ENCODE measurements at regions of chr1 and their contacts with region 1.

Region 1: DNA sequence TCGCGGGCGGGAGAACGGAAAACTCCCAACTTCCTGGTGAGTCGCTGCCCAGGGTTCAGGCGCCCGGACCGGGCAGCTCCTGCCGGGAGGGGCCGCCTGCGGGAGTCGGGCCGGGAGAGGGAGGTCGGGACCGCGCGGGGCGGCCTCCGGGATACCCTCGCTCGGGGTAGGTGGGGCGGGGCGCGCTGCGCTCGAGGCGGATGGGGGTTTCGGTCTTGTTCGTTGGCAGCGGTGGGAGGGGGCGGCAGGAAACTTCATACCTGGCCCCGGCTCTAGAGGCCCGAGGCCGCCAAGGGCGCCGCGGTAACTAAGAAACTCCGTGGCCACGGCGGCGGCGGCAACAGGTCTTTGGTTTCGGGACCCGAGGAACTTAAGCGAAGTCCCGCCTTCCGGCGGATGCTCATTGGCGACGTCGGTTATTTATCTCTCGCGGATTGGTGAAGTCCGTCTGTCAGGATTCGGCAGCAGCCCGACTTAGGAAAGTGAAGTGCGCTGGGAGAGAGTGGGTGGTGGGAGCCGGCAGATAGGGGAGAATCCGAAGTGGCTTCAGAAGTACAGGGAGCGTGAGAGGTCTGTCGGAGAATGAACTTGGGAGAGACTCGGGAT is 546 bp downstream of the NEK7 start:
- DNase-seq: peak; percentile 73
- ATAC-seq: peak; percentile 50
- H3K4me3 Mint-ChIP-seq: peak overlapping the region; percentile 98
- H3K27ac Mint-ChIP-seq: peak overlapping the region; percentile 98
- H3K4me1 Mint-ChIP-seq: peaks cover 49% of the 10 kb centered on the region
- H3K27me3 Mint-ChIP-seq: no peaks in the 10 kb centered on the region
- CTCF ChIP-seq: no peak

Region 2: DNA sequence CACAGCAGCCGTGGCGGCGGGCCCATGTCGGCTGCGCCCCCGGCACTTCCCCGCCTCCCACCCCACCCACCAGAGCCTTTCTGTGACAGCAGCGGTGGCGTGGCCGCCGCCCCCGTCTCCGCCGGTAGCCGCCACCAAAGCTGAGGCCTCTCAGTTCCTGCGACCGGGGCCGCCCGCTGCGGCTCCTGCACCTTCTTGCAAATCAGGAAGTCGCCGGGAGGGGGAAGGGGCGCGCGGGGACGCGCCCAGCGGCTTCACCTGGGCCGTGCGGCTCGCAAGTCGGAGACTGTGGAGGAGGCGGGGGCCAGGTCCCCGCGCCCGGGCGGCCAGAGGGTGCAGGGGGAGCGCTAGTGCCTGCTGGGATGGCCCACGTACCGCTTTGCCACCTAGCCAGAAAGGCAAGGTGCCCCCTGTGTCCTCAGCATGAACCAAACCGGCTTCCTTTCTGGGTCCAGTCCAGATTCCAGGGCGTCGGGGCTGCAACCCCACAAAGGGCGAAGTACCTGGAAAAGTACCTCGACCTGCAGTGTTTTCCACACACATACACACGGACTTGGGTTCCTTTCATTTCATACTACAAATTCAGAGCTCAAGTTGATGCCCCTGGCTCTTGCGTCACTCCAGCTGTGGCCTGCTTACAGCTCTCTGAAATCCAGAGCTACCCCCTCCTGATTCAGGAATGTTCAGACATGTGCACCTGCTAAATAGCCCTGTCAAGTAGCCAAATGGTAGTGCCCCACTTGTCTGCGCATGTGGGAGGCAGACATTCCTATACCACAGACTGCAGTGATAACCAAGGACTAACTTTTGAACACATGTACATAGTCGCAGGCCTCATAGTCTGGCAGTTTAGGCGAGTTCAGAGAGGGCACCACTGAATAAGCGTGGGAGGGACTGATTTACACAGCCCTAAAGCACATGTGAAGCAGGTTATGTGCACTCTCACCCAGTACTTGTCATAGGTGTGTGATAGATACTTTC is 381.8 kb before region 1 on chr1 and contains the start of gene DENND1B:
- CTCF ChIA-PET with region 1: no interaction called
- POLR2A ChIA-PET with region 1: no interaction called
- intact Hi-C with region 1: loop called (anchors 2 kb)
- DNase-seq: peak; percentile 81
- ATAC-seq: peak; percentile 72
- H3K4me3 Mint-ChIP-seq: peak within 1 kb of the TSS; percentile 87
- H3K27ac Mint-ChIP-seq: peak within 1 kb of the TSS; percentile 96
- H3K4me1 Mint-ChIP-seq: peaks cover 69% of the 10 kb centered on the region
- H3K27me3 Mint-ChIP-seq: no peaks in the 10 kb centered on the region
- CTCF ChIP-seq: no peak
- total RNA-seq, gene DENND1B: 15.5 and 19.2 TPM in 2 replicates

Region 3: DNA sequence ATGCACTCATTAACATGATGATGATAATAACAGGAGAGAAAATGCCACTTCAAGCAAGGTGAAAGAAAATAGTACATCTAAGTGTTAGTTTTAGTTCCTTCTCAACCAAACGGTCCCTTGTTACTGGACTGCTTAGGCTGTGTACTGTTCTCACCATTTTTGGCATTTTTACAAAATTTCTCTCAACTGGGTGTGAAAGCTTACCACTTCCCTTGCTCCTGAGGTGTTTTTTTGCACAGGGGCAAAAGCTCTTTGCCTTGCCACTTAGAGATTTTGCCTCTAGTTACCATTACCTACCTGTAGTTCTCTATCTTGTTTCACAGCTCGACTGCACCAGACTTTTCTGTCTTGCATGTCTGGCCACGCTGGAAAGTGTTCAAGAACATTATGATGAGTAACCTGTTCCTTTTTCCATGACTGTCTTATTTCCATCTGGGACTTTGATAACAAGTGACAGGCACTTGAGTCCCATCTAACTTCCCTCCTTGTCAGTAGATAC is 10.1 kb after region 1 on chr1:
- CTCF ChIA-PET with region 1: no interaction called
- POLR2A ChIA-PET with region 1: interaction called, 46 read pairs
- intact Hi-C with region 1: loop called (anchors 1 kb)
- DNase-seq: no peak
- ATAC-seq: peak; percentile 52
- H3K4me3 Mint-ChIP-seq: peak overlapping the region; percentile 12
- H3K27ac Mint-ChIP-seq: peak overlapping the region; percentile 79
- H3K4me1 Mint-ChIP-seq: peaks cover 74% of the 10 kb centered on the region
- H3K27me3 Mint-ChIP-seq: no peaks in the 10 kb centered on the region
- CTCF ChIP-seq: no peak

Region 4: DNA sequence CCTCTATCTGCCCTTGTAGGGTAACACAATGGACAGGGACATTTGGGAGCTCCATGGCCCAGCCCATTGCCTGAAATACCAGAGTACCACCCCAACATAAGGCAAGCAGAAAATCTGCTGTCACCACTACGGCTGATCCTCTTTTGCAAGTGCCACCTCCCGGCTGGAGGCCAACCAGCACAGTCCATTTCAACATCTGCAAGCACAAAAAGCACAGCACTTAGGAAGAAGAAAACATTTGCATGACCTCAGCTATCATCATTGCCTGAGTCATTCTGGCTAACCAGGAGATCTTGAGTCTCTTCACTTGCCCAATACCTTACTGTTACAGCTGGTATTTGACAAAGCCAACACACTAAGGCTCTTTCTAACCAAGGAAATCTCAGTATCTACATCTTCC is 55.3 kb after region 1 on chr1:
- CTCF ChIA-PET with region 1: no interaction called
- POLR2A ChIA-PET with region 1: no interaction called
- intact Hi-C with region 1: no loop called
- DNase-seq: no peak
- ATAC-seq: no peak
- H3K4me3 Mint-ChIP-seq: no peak overlapping the region
- H3K27ac Mint-ChIP-seq: no peak overlapping the region
- H3K4me1 Mint-ChIP-seq: peaks cover 7% of the 10 kb centered on the region
- H3K27me3 Mint-ChIP-seq: no peaks in the 10 kb centered on the region
- CTCF ChIP-seq: no peak

Region 5: GRCh38 chr1:198253668-198254067 is 96.3 kb after region 1 on chr1:
- CTCF ChIA-PET with region 1: no interaction called
- POLR2A ChIA-PET with region 1: interaction called, 4 read pairs
- intact Hi-C with region 1: loop called (anchors 1 kb)
- DNase-seq: no peak
- ATAC-seq: peak; percentile 94
- H3K4me3 Mint-ChIP-seq: peak overlapping the region; percentile 59
- H3K27ac Mint-ChIP-seq: peak overlapping the region; percentile 79
- H3K4me1 Mint-ChIP-seq: peaks cover 24% of the 10 kb centered on the region
- H3K27me3 Mint-ChIP-seq: no peaks in the 10 kb centered on the region
- CTCF ChIP-seq: no peak

Region 6: DNA sequence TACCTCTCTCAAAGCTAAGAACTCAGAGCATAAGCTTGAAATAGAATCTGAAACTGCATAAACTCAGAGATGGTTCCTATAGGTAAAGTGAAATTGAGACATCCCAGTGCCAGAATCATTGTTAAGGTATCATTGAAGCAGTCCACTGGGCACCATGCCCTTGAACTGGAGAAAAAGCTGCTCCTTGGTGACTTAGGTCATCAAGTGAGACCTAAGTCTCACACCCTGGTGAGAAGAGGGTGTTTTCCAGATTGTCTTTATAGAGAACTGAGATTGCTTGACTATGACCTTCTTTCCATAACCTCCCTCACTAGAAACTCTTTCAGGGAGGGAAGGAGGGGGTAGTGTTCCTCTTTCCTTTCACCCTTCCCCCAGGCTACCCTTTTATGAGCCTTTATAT is 392.5 kb after region 1 on chr1:
- CTCF ChIA-PET with region 1: no interaction called
- POLR2A ChIA-PET with region 1: no interaction called
- intact Hi-C with region 1: loop called (anchors 5 kb)
- DNase-seq: no peak
- ATAC-seq: peak; percentile 90
- H3K4me3 Mint-ChIP-seq: peak overlapping the region; percentile 63
- H3K27ac Mint-ChIP-seq: peak overlapping the region; percentile 89
- H3K4me1 Mint-ChIP-seq: peaks cover 67% of the 10 kb centered on the region
- H3K27me3 Mint-ChIP-seq: no peaks in the 10 kb centered on the region
- CTCF ChIP-seq: no peak

Region 7: DNA sequence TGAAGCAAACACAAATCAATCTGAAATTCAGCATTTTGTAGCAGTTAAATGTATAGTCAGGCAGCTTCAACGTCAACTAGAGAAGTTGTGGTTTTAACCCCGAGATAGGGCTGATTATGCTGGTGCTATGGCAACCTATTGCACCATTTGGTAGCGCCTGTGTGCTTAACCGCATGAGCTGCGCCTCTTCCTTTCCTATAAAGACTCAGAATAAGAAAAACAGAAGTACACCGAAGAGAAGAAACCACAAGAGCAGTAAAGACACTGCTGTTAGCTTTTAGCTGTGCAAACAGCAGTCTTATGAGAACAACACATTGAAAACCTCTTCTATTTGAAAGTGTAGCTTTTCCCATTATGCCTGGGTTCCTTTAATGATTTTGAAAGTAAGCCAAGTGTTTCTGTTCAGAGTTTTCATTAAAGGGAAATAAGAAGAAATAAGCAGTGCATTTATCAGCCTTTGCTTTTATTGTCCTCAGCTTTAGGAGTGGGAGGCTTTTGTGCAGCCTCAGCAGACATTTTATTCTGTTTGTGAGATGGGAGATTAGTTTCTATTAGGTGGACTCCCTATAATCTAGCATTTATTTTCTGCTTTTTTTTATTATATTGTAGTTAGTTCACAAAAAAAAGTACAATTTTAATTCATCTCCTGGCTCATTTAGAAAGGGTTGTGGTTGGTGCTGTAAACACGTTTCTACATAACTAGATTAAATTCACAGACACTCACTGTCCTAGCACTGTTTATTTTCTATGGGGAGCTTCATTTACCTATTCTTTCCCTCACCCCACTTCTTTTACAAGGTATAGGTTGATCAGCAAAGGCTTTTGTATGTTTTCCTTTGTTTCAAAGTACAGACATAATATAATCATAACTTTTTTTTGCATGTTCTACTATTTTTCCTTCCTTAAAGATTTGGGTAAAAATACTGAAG is 524.8 kb after region 1 on chr1:
- CTCF ChIA-PET with region 1: interaction called, 6 read pairs
- POLR2A ChIA-PET with region 1: interaction called, 4 read pairs
- intact Hi-C with region 1: loop called (anchors 1 kb)
- DNase-seq: peak; percentile 42
- ATAC-seq: peak; percentile 73
- H3K4me3 Mint-ChIP-seq: peak overlapping the region; percentile 63
- H3K27ac Mint-ChIP-seq: peak overlapping the region; percentile 88
- H3K4me1 Mint-ChIP-seq: peaks cover 92% of the 10 kb centered on the region
- H3K27me3 Mint-ChIP-seq: no peaks in the 10 kb centered on the region
- CTCF ChIP-seq: no peak

Region 8: GRCh38 chr1:199322278-199322677 is 1164.9 kb after region 1 on chr1:
- CTCF ChIA-PET with region 1: no interaction called
- POLR2A ChIA-PET with region 1: no interaction called
- intact Hi-C with region 1: no loop called
- DNase-seq: no peak
- ATAC-seq: no peak
- H3K4me3 Mint-ChIP-seq: no peak overlapping the region
- H3K27ac Mint-ChIP-seq: no peak overlapping the region
- H3K4me1 Mint-ChIP-seq: peaks cover 34% of the 10 kb centered on the region
- H3K27me3 Mint-ChIP-seq: no peaks in the 10 kb centered on the region
- CTCF ChIP-seq: no peak

Measured in activated B cell treated with CpG ODN at 0.5 μM for 24 hours (primary cell).